ENCODE measurements at regions of chr11 and their contacts with region 1.

Region 1: DNA sequence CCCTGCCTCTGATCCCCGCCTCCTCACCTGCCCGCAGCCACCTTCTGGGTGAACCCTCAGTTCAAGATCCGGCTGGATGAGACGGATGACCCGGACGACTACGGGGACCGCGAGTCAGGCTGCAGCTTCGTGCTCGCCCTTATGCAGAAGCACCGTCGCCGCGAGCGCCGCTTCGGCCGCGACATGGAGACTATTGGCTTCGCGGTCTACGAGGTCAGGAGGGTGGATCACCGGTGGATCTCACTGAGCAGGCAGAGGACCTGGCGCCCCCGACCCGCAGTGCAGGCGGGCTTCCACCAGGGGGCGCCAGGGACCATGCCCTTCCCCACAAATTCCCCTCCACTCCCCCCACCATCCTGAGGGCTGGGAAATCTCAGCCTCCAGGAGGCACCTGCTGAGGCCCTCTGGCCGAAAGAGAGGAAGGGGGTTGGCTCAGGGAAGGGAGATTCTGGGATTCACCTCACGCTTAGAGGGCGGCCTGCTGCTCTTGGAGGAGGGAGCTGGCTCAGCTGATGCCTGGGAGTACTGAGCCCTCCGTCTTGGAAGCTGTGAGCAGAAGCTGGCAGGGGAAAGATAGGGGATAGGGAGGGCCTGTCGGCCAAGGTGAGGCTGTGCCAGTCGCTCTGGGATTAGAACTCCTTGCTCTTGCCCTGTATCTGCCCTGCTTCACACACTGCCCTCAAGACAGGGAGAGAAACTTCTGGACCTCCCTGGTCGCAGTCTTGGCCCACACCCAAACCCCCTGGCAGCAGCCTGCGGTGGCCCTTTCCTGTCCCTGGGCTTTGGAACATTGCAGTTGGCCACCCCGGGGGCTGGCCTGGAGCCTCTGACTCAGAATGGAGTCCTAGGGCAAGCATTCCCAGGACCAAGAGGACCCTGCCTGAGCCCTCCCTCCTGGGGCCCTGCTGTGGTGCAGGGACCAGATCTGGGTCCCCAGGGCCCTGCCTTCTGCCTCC is 23.2 kb downstream of the CAPN1 start:
- DNase-seq: peak in 8 of 9 donors; percentile 33 to 71 (median 52)
- ATAC-seq: peak; percentile 75
- H3K4me3 ChIP-seq: no peak overlapping the region
- H3K4me3 Mint-ChIP-seq: no peak overlapping the region
- H3K27ac ChIP-seq: no peak overlapping the region
- H3K27ac Mint-ChIP-seq: peak overlapping the region in 2 of 9 donors; percentile 30 to 65
- H3K4me1 ChIP-seq: no peaks in the 10 kb centered on the region
- H3K4me1 Mint-ChIP-seq: peaks cover 0 to 13% (median 5%) of the 10 kb centered on the region in 7 donors
- H3K27me3 ChIP-seq: no peaks in the 10 kb centered on the region
- H3K27me3 Mint-ChIP-seq: no peaks in the 10 kb centered on the region

Region 2: GRCh38 chr11:64723117-64723906 is 481.6 kb before region 1 on chr11 and contains the start of gene NRXN2:
- CTCF ChIA-PET with region 1: no interaction called
- POLR2A ChIA-PET with region 1: no interaction called
- intact Hi-C with region 1: no loop called
- DNase-seq: peak; percentile 72 to 86 (median 80)
- ATAC-seq: peak; percentile 93
- H3K4me3 ChIP-seq: peak within 1 kb of the TSS; percentile 71
- H3K4me3 Mint-ChIP-seq: peak within 1 kb of the TSS; percentile 36 to 79 (median 66)
- H3K27ac ChIP-seq: peak within 1 kb of the TSS; percentile 81
- H3K27ac Mint-ChIP-seq: peak within 1 kb of the TSS in 8 of 9 donors; percentile 23 to 79 (median 62)
- H3K4me1 ChIP-seq: peaks cover 0 to 5% of the 10 kb centered on the region in 2 donors
- H3K4me1 Mint-ChIP-seq: peaks cover 0 to 22% (median 16%) of the 10 kb centered on the region in 7 donors
- H3K27me3 ChIP-seq: peaks cover 0 to 5% of the 10 kb centered on the region in 2 donors
- H3K27me3 Mint-ChIP-seq: peaks cover 10 to 42% (median 17%) of the 10 kb centered on the region in 5 donors
- total RNA-seq, gene NRXN2: 0.07 to 0.71 (median 0.27) TPM in 3 of 5 experiments, not detected in the others

Region 3: GRCh38 chr11:65013692-65014145 is 191.2 kb before region 1 on chr11:
- CTCF ChIA-PET with region 1: no interaction called
- POLR2A ChIA-PET with region 1: no interaction called
- intact Hi-C with region 1: no loop called
- DNase-seq: peak in 8 of 9 donors; percentile 77 to 93 (median 90)
- ATAC-seq: peak; percentile 94
- H3K4me3 ChIP-seq: peak overlapping the region; percentile 97
- H3K4me3 Mint-ChIP-seq: peak overlapping the region; percentile 90 to 95 (median 92)
- H3K27ac ChIP-seq: peak overlapping the region; percentile 84
- H3K27ac Mint-ChIP-seq: peak overlapping the region; percentile 89 to 99 (median 95)
- H3K4me1 ChIP-seq: peaks cover 4 to 9% of the 10 kb centered on the region in 2 donors
- H3K4me1 Mint-ChIP-seq: peaks cover 14 to 33% (median 29%) of the 10 kb centered on the region in 7 donors
- H3K27me3 ChIP-seq: no peaks in the 10 kb centered on the region
- H3K27me3 Mint-ChIP-seq: no peaks in the 10 kb centered on the region

Region 4: GRCh38 chr11:65225279-65226102 is 20.6 kb after region 1 on chr11:
- CTCF ChIA-PET with region 1: interaction called, 11 read pairs
- POLR2A ChIA-PET with region 1: no interaction called
- intact Hi-C with region 1: no loop called
- DNase-seq: peak; percentile 26 to 67 (median 56)
- ATAC-seq: peak; percentile 82
- H3K4me3 ChIP-seq: peak overlapping the region; percentile 48
- H3K4me3 Mint-ChIP-seq: peak overlapping the region; percentile 76 to 86 (median 79)
- H3K27ac ChIP-seq: no peak overlapping the region
- H3K27ac Mint-ChIP-seq: no peak overlapping the region
- H3K4me1 ChIP-seq: peaks cover 0 to 5% of the 10 kb centered on the region in 2 donors
- H3K4me1 Mint-ChIP-seq: peaks cover 6 to 15% (median 8%) of the 10 kb centered on the region in 7 donors
- H3K27me3 ChIP-seq: peaks cover 0 to 3% of the 10 kb centered on the region in 2 donors
- H3K27me3 Mint-ChIP-seq: peaks cover 12 to 39% (median 18%) of the 10 kb centered on the region in 5 donors

Region 5: GRCh38 chr11:65251476-65251875 is 46.6 kb after region 1 on chr11:
- CTCF ChIA-PET with region 1: no interaction called
- POLR2A ChIA-PET with region 1: no interaction called
- intact Hi-C with region 1: loop called in 1 of 2 experiments (anchors 2 kb)
- DNase-seq: no peak
- ATAC-seq: no peak
- H3K4me3 ChIP-seq: no peak overlapping the region
- H3K4me3 Mint-ChIP-seq: no peak overlapping the region
- H3K27ac ChIP-seq: no peak overlapping the region
- H3K27ac Mint-ChIP-seq: no peak overlapping the region
- H3K4me1 ChIP-seq: no peaks in the 10 kb centered on the region
- H3K4me1 Mint-ChIP-seq: no peaks in the 10 kb centered on the region
- H3K27me3 ChIP-seq: no peaks in the 10 kb centered on the region
- H3K27me3 Mint-ChIP-seq: peaks cover 0 to 8% (median 0%) of the 10 kb centered on the region in 5 donors